K562 (cell line): ENCODE measurements at regions of chr3 and their contacts with region 1.

Region 1: DNA sequence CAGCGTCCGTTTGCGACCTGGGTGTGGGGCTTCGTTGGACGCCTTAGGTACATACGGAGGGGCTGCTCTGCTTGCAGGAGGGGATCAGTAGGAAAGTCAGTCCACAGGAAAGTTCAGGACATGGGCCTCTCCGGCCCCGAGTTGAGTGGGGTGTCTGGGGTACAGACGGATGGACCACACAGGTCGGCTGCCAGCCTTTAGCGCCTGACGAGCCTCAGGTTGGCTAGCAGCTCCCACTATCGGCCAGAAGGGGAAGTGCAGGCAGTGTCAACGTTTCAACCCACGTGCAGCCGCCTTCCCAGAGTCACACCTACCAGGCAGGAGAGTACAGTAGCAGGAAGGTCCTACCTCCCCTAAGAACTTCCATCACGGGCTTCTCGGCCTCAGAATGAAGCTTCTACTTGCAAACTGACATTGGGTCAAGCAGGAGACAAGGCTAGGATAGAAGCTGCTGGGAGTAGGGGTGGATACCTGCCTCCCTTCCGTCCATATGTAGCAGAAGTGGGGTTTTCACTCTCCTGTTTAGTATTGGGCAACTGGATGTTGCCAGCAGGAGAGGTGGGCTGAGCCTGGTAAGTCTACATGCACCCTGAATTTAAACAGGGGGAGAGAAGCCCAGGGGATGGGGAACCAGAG is 1.8 kb upstream of the SCN5A start:
- DNase-seq: peak; percentile 78 to 86 (median 84)
- ATAC-seq: peak; percentile 76
- H3K4me3 ChIP-seq: no peak overlapping the region
- H3K27ac ChIP-seq: no peak overlapping the region
- H3K4me1 ChIP-seq: peaks cover 6 to 18% of the 10 kb centered on the region in 2 experiments
- H3K27me3 ChIP-seq: peaks cover 14 to 34% of the 10 kb centered on the region in 2 experiments; a peak in 4 of 5 replicates
- CTCF ChIP-seq: peak; percentile 95 to 99 (median 97)
- EP300 ChIP-seq: no peak
- POLR2A ChIP-seq: no peak
- RAD21 ChIP-seq: peak; percentile 66 to 82

Region 2: DNA sequence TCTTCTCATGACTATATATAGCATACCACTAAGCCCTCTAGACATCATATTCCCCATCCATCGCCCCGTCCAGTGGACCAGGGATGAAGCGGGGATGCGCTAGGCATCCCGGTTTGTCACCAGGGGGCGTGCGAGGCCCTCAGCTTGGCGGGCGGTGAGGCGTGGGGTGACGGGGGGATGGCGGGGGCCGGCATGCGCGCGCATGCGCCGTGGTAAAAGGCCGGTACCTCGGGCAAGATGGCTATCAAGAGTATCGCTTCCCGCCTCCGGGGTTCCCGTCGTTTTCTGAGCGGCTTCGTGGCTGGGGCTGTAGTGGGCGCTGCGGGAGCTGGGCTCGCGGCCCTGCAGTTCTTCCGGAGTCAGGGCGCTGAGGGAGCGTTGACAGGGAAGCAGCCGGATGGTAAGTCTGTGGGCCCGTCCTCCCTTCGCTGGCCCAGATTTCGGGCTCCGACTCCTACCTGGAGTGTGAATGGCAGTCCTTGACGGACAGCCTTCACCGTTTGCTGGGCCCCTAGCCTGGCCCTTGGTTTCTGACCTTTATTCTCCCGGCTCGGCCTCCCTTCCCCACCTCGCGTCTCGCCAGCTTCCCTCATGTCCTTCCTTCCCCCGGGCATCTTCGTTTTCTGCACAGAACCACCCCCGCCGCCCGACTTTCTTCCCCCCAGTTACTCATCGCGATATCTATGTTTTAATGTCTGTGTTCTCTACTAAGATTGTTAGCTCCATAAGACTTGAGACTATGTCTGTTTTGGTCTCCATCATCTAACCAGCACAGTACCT is 155.0 kb before region 1 on chr3 and contains the start of gene EXOG:
- CTCF ChIA-PET with region 1: interaction called, 9 read pairs
- POLR2A ChIA-PET with region 1: no interaction called
- in situ Hi-C with region 1: no loop called
- intact Hi-C with region 1: loop called (anchors 1 kb)
- DNase-seq: peak; percentile 97 to 100 (median 100)
- ATAC-seq: peak; percentile 99
- H3K4me3 ChIP-seq: peak within 1 kb of the TSS; percentile 63
- H3K27ac ChIP-seq: peak within 1 kb of the TSS; percentile 69
- H3K4me1 ChIP-seq: peaks cover 4 to 5% of the 10 kb centered on the region in 2 experiments; a peak in 4 of 5 replicates
- H3K27me3 ChIP-seq: no peaks in the 10 kb centered on the region
- CTCF ChIP-seq: peak; percentile 87 to 96 (median 90)
- EP300 ChIP-seq: peak; percentile 12; the same call in 1 of the 2 replicates
- POLR2A ChIP-seq: peak; percentile 86
- RAD21 ChIP-seq: peak; percentile 82 to 83
- polyA plus RNA-seq, gene EXOG: 13.1 to 21.7 TPM

Region 3: DNA sequence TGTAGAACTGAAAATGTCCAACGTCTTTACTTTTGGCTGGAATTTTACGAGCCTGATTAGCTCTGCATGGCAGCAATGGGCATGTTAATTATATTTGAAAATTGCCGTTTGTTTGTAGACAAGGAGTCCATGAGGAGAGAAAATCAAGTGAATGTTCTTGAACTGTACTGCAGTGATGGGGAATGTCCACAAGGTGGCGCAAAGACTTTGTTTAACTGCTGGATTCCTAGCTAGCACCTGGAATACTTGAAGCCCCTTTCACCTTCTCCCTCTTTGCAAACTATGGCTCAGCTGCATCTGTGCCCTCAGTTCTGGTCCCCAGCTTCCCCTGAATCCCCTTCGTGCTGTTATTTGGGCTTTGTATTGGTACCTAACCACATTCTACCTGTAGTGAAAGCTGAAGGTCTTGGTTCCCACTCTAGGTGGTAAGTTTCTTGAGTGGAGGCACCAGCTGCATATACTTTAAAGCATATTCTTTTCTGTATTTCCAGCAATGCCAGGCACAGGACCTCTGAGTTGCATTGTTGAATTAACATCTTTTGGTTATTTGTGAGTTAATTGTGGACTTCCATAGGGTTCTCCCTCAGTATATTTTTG is 129.8 kb before region 1 on chr3:
- CTCF ChIA-PET with region 1: interaction called, 26 read pairs
- POLR2A ChIA-PET with region 1: no interaction called
- in situ Hi-C with region 1: loop called (anchors 10 kb)
- intact Hi-C with region 1: loop called (anchors 1 kb)
- DNase-seq: peak; percentile 65 to 86 (median 67)
- ATAC-seq: peak; percentile 87
- H3K4me3 ChIP-seq: no peak overlapping the region
- H3K27ac ChIP-seq: no peak overlapping the region
- H3K4me1 ChIP-seq: no peaks in the 10 kb centered on the region
- H3K27me3 ChIP-seq: no peaks in the 10 kb centered on the region
- CTCF ChIP-seq: peak; percentile 83 to 94 (median 91)
- EP300 ChIP-seq: no peak
- POLR2A ChIP-seq: no peak
- RAD21 ChIP-seq: peak; percentile 75 to 85